ENCODE measurements at regions of chr3 and their contacts with region 1.

Region 1: DNA sequence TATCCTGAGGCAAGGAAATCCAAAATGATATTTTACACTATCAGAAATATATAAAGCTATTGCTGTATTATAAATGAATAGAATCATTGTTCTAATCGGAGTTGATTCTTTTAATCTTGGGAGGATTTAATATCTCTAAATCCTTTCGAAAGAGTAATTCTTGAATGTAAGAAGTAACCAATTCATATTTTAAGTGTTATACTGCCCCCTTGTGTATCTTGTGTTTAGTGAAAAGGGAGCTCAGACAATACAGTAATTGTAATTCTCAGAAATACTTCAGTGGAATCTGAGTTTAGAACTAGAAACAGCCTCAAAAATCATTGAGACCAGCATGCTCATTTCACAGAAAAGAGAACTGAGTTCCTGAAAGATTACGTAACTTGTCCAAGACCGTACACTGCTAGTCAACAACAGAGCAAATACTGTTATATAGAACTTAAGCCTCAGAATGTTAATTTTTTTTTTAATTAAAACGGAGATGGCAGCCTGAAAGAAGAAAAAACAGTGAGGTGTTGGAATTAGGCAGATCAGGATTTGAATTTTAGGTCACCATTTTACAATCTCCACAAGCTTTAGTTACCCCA is 42.9 kb downstream of the PLCH1 start:
- DNase-seq: peak in 2 of 9 experiments; percentile 33 to 57
- ATAC-seq: peak; percentile 38
- H3K4me3 ChIP-seq: no peak overlapping the region
- H3K4me3 Mint-ChIP-seq: no peak overlapping the region
- H3K27ac ChIP-seq: no peak overlapping the region
- H3K27ac Mint-ChIP-seq: no peak overlapping the region
- H3K4me1 ChIP-seq: no peaks in the 10 kb centered on the region
- H3K4me1 Mint-ChIP-seq: no peaks in the 10 kb centered on the region
- H3K27me3 ChIP-seq: no peaks in the 10 kb centered on the region
- H3K27me3 Mint-ChIP-seq: no peaks in the 10 kb centered on the region
- CTCF ChIP-seq: peak; percentile 91

Region 2: GRCh38 chr3:154334973-154335420 is 1367.0 kb before region 1 on chr3:
- CTCF ChIA-PET with region 1: interaction called, 6 read pairs
- POLR2A ChIA-PET with region 1: no interaction called
- intact Hi-C with region 1: loop called (anchors 1 to 2 kb)
- DNase-seq: peak in 2 of 9 experiments; percentile 46 to 60
- ATAC-seq: peak; percentile 54
- H3K4me3 ChIP-seq: no peak overlapping the region
- H3K4me3 Mint-ChIP-seq: no peak overlapping the region
- H3K27ac ChIP-seq: no peak overlapping the region
- H3K27ac Mint-ChIP-seq: no peak overlapping the region
- H3K4me1 ChIP-seq: no peaks in the 10 kb centered on the region
- H3K4me1 Mint-ChIP-seq: no peaks in the 10 kb centered on the region
- H3K27me3 ChIP-seq: no peaks in the 10 kb centered on the region
- H3K27me3 Mint-ChIP-seq: peaks cover 14% of the 10 kb centered on the region
- CTCF ChIP-seq: peak; percentile 57

Region 3: GRCh38 chr3:154758109-154758868 is 943.7 kb before region 1 on chr3:
- CTCF ChIA-PET with region 1: no interaction called
- POLR2A ChIA-PET with region 1: no interaction called
- intact Hi-C with region 1: loop called in 1 of 2 experiments (anchors 10 kb)
- DNase-seq: no peak
- ATAC-seq: no peak
- H3K4me3 ChIP-seq: no peak overlapping the region
- H3K4me3 Mint-ChIP-seq: no peak overlapping the region
- H3K27ac ChIP-seq: no peak overlapping the region
- H3K27ac Mint-ChIP-seq: no peak overlapping the region
- H3K4me1 ChIP-seq: no peaks in the 10 kb centered on the region
- H3K4me1 Mint-ChIP-seq: no peaks in the 10 kb centered on the region
- H3K27me3 ChIP-seq: no peaks in the 10 kb centered on the region
- H3K27me3 Mint-ChIP-seq: no peaks in the 10 kb centered on the region
- CTCF ChIP-seq: no peak

Region 4: DNA sequence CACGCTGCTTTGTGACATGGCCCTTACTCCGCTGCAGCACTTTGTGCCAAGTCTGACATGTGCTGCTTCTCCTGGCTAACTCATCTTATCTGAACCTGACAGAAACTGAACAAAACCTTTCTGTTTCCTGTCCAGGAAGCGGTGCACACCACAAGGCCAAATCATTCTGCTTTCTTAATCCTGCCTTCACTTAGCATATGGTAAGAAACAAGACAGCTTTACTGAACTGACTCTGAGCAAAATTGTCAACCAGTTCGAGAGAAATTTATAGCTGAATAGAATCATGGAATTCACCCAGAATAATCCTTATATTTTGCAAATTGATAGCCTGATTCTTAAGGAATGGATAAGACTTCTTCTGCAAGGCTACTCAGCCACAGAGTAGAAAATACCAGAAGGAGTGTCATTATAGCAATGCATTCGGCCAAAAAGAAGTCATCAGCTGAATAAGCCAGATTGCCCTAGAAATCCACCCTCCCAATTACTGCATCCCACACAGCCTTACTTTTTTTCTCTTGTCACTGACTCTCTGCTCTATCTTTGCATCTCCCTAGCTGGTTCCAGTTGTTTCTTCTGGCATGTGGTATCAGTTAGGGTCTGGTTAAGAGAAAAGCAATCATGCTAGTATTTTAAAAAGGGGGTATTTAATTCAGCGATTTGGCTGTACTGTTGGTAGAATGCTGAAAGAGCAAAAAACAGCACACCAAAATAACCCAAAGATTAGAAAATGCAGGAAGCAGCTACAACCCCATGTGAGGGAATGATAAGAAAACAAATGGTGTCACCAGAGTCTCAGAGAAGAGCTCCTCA is 366.9 kb before region 1 on chr3:
- CTCF ChIA-PET with region 1: interaction called, 10 read pairs
- POLR2A ChIA-PET with region 1: no interaction called
- intact Hi-C with region 1: no loop called
- DNase-seq: peak in 1 of 9 experiments; percentile 11
- ATAC-seq: no peak
- H3K4me3 ChIP-seq: no peak overlapping the region
- H3K4me3 Mint-ChIP-seq: no peak overlapping the region
- H3K27ac ChIP-seq: no peak overlapping the region
- H3K27ac Mint-ChIP-seq: no peak overlapping the region
- H3K4me1 ChIP-seq: peaks cover 10% of the 10 kb centered on the region
- H3K4me1 Mint-ChIP-seq: peaks cover 11% of the 10 kb centered on the region
- H3K27me3 ChIP-seq: no peaks in the 10 kb centered on the region
- H3K27me3 Mint-ChIP-seq: no peaks in the 10 kb centered on the region
- CTCF ChIP-seq: no peak

Region 5: GRCh38 chr3:155352900-155353490 is 349.0 kb before region 1 on chr3:
- CTCF ChIA-PET with region 1: interaction called, 18 read pairs
- POLR2A ChIA-PET with region 1: no interaction called
- intact Hi-C with region 1: loop called in 1 of 2 experiments (anchors 1 kb)
- DNase-seq: peak in 2 of 9 experiments; percentile 8 to 35
- ATAC-seq: no peak
- H3K4me3 ChIP-seq: no peak overlapping the region
- H3K4me3 Mint-ChIP-seq: no peak overlapping the region
- H3K27ac ChIP-seq: no peak overlapping the region
- H3K27ac Mint-ChIP-seq: no peak overlapping the region
- H3K4me1 ChIP-seq: no peaks in the 10 kb centered on the region
- H3K4me1 Mint-ChIP-seq: no peaks in the 10 kb centered on the region
- H3K27me3 ChIP-seq: no peaks in the 10 kb centered on the region
- H3K27me3 Mint-ChIP-seq: no peaks in the 10 kb centered on the region
- CTCF ChIP-seq: peak; percentile 34

Region 6: GRCh38 chr3:155712008-155712407 is 10.0 kb after region 1 on chr3:
- CTCF ChIA-PET with region 1: interaction called, 13 read pairs
- POLR2A ChIA-PET with region 1: no interaction called
- intact Hi-C with region 1: no loop called
- DNase-seq: no peak
- ATAC-seq: no peak
- H3K4me3 ChIP-seq: no peak overlapping the region
- H3K4me3 Mint-ChIP-seq: no peak overlapping the region
- H3K27ac ChIP-seq: no peak overlapping the region
- H3K27ac Mint-ChIP-seq: no peak overlapping the region
- H3K4me1 ChIP-seq: no peaks in the 10 kb centered on the region
- H3K4me1 Mint-ChIP-seq: no peaks in the 10 kb centered on the region
- H3K27me3 ChIP-seq: no peaks in the 10 kb centered on the region
- H3K27me3 Mint-ChIP-seq: no peaks in the 10 kb centered on the region
- CTCF ChIP-seq: no peak

Region 7: GRCh38 chr3:155744626-155745324 is 42.8 kb after region 1 on chr3 and contains the start of gene PLCH1:
- CTCF ChIA-PET with region 1: no interaction called
- POLR2A ChIA-PET with region 1: no interaction called
- intact Hi-C with region 1: no loop called
- DNase-seq: peak in 7 of 9 experiments; percentile 3 to 57 (median 47)
- ATAC-seq: peak; percentile 75
- H3K4me3 ChIP-seq: peak within 1 kb of the TSS; percentile 60 to 80
- H3K4me3 Mint-ChIP-seq: peak within 1 kb of the TSS; percentile 86
- H3K27ac ChIP-seq: no peak within 1 kb of the TSS
- H3K27ac Mint-ChIP-seq: no peak within 1 kb of the TSS
- H3K4me1 ChIP-seq: peaks cover 19% of the 10 kb centered on the region
- H3K4me1 Mint-ChIP-seq: peaks cover 17% of the 10 kb centered on the region
- H3K27me3 ChIP-seq: peaks cover 0 to 17% of the 10 kb centered on the region in 2 experiments
- H3K27me3 Mint-ChIP-seq: peaks cover 39% of the 10 kb centered on the region
- CTCF ChIP-seq: no peak
- total RNA-seq, gene PLCH1: not detected

Region 8: DNA sequence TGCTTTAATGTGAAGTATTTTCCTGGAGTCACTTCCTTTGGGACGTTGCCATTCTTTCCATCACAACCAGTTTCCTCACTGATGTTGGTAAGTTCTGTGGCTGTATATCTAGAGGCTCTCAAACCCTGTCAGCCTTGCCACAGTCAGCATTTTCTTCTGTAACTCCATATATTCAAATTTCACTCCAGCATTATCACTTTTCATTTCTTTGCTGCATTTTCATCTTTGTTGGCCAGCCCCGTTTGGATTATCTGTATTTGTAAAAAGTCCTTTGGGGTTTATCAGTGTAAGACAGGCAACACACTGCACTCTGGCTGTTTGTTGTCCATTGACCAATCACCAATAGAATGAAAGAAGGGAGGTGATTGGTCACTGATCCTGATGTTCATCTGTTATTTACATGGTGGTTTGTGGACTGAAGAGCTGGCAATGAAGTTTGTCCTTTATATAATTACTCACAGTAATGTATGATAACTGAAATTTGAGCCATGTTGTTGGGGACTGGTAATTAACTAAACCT is 188.8 kb after region 1 on chr3:
- CTCF ChIA-PET with region 1: no interaction called
- POLR2A ChIA-PET with region 1: no interaction called
- intact Hi-C with region 1: no loop called
- DNase-seq: peak in 1 of 9 experiments; percentile 18
- ATAC-seq: no peak
- H3K4me3 ChIP-seq: no peak overlapping the region
- H3K4me3 Mint-ChIP-seq: no peak overlapping the region
- H3K27ac ChIP-seq: no peak overlapping the region
- H3K27ac Mint-ChIP-seq: no peak overlapping the region
- H3K4me1 ChIP-seq: no peaks in the 10 kb centered on the region
- H3K4me1 Mint-ChIP-seq: peaks cover 31% of the 10 kb centered on the region
- H3K27me3 ChIP-seq: no peaks in the 10 kb centered on the region
- H3K27me3 Mint-ChIP-seq: no peaks in the 10 kb centered on the region
- CTCF ChIP-seq: no peak

Region 9: DNA sequence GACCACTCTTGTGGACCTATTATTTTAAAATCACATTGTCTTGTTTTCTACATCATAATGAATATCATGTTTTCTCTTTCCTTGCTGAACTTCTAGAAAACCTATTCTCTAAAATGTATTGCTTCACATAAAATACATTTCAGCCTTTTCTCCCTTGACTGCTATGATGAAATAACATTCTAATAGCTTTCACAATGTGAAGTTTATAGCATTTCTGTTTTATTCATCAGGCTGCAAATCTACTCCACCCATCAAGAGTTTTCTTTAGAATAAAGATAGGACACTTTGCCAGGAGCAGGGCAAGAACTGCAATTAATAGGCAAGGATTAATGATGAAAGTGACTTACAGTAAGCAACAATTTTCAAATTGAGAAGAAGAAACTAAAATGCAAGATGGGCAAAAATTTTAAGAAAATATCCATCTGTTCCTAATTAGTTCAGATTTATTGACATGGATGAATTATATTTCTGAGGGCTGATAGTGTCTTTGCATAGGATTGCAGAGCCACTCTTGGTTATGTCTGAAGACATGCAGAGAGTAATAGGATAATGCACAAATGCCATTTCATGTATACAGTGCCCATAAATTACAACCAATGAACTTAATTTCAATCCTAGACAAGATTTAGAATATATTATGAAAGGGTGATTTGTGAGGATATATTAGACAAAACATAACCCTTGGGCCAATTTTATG is 1145.9 kb after region 1 on chr3:
- CTCF ChIA-PET with region 1: no interaction called
- POLR2A ChIA-PET with region 1: no interaction called
- intact Hi-C with region 1: no loop called
- DNase-seq: no peak
- ATAC-seq: no peak
- H3K4me3 ChIP-seq: no peak overlapping the region
- H3K4me3 Mint-ChIP-seq: no peak overlapping the region
- H3K27ac ChIP-seq: no peak overlapping the region
- H3K27ac Mint-ChIP-seq: no peak overlapping the region
- H3K4me1 ChIP-seq: no peaks in the 10 kb centered on the region
- H3K4me1 Mint-ChIP-seq: no peaks in the 10 kb centered on the region
- H3K27me3 ChIP-seq: no peaks in the 10 kb centered on the region
- H3K27me3 Mint-ChIP-seq: no peaks in the 10 kb centered on the region
- CTCF ChIP-seq: no peak